Activated naive CD4-positive, alpha-beta T cell treated with anti-CD3 and anti-CD28 coated beads, Interleukin-2, amount 10 ng/mL, durations not matched to agents 7 days and 5 days (primary cell): ENCODE measurements at regions of chr6 and their contacts with region 1.

Region 1: DNA sequence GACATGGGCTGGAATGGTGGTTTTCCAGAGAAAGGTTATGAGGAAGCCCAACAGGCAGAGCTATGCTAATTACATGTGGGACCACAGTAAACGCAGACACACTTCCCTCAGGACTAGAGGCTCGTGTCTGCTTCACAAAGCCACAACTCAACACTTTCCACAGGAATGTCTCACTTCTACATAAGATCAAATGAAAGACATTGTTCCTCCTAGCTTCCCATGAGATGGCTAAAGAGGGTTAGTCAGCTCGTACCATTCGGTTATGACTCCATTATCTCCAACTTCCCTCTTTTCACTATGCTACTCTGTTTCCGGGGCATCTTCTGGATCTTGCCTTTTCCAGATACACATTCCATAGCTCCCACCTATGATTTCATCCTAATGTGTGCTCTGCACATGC is 29.1 kb upstream of the ZC3H12D start:
- DNase-seq: no peak
- H3K4me3 Mint-ChIP-seq: no peak overlapping the region
- H3K27ac Mint-ChIP-seq: no peak overlapping the region
- H3K4me1 Mint-ChIP-seq: peaks cover 23% of the 10 kb centered on the region
- H3K27me3 Mint-ChIP-seq: no peaks in the 10 kb centered on the region

Region 2: GRCh38 chr6:149028767-149029405 is 485.0 kb before region 1 on chr6:
- CTCF ChIA-PET with region 1: interaction called, 22 read pairs
- DNase-seq: peak; percentile 78
- H3K4me3 Mint-ChIP-seq: no peak overlapping the region
- H3K27ac Mint-ChIP-seq: no peak overlapping the region
- H3K4me1 Mint-ChIP-seq: peaks cover 53% of the 10 kb centered on the region
- H3K27me3 Mint-ChIP-seq: no peaks in the 10 kb centered on the region

Region 3: GRCh38 chr6:149082286-149082707 is 431.6 kb before region 1 on chr6:
- CTCF ChIA-PET with region 1: interaction called, 16 read pairs
- DNase-seq: peak; percentile 94
- H3K4me3 Mint-ChIP-seq: peak overlapping the region; percentile 0
- H3K27ac Mint-ChIP-seq: peak overlapping the region; percentile 89
- H3K4me1 Mint-ChIP-seq: peaks cover 88% of the 10 kb centered on the region
- H3K27me3 Mint-ChIP-seq: no peaks in the 10 kb centered on the region

Region 4: GRCh38 chr6:149454386-149454848 is 59.5 kb before region 1 on chr6:
- CTCF ChIA-PET with region 1: interaction called, 11 read pairs
- DNase-seq: no peak
- H3K4me3 Mint-ChIP-seq: no peak overlapping the region
- H3K27ac Mint-ChIP-seq: no peak overlapping the region
- H3K4me1 Mint-ChIP-seq: peaks cover 10% of the 10 kb centered on the region
- H3K27me3 Mint-ChIP-seq: no peaks in the 10 kb centered on the region

Region 5: GRCh38 chr6:149484733-149485700 is 28.9 kb before region 1 on chr6 and contains the start of gene ZC3H12D:
- CTCF ChIA-PET with region 1: interaction called, 27 read pairs
- DNase-seq: peak; percentile 87
- H3K4me3 Mint-ChIP-seq: peak within 1 kb of the TSS; percentile 80
- H3K27ac Mint-ChIP-seq: peak within 1 kb of the TSS; percentile 98
- H3K4me1 Mint-ChIP-seq: peaks cover 60% of the 10 kb centered on the region
- H3K27me3 Mint-ChIP-seq: no peaks in the 10 kb centered on the region

Region 6: DNA sequence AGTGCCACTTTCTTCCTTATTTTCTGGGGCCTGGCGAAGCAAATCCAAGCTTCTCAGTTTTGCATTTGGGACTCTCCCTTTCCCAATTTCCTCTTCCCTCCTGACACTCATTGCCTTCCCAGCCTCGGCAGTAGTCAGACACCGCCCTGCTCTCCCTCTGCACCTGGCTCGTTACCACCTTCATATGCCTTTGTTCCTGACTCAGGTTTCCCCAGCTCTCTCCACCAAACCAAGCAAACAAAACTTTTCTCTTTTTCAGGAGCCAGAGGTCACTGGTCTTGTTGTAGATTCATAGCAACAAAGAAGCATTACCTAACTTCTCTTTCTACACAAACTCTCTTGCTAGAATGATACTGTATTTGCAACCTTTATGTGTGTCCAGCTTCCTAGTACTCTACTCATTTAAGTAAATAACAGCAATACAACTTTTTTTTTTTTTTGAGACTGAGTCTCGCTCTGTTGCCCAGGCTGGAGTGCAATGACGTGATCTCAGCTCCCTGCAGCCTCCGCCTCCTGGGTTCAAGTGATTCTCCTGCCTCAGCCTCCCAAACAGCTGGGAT is 20.1 kb before region 1 on chr6:
- CTCF ChIA-PET with region 1: interaction called, 31 read pairs
- DNase-seq: no peak
- H3K4me3 Mint-ChIP-seq: no peak overlapping the region
- H3K27ac Mint-ChIP-seq: peak overlapping the region; percentile 42
- H3K4me1 Mint-ChIP-seq: peaks cover 53% of the 10 kb centered on the region
- H3K27me3 Mint-ChIP-seq: no peaks in the 10 kb centered on the region

Region 7: DNA sequence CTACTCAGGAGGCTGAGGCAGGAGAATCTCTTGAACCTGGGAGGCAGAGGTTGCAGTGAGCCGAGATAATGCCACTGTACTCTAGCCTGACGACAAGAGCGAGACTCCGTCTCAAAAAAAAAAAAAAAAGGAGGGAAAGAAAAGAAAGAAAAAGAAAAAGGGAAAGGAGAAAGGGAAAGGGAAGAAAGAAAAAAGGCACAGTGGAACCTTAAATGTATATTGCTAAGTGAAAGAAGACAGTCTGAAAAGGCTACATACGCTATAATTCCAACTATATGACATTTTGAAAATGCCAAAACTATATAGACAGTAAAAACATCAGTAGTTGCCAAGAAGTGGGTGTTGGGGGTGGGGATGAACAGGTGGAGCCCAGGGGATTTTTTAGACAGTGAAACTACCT is 15.7 kb after region 1 on chr6:
- CTCF ChIA-PET with region 1: interaction called, 23 read pairs
- DNase-seq: no peak
- H3K4me3 Mint-ChIP-seq: no peak overlapping the region
- H3K27ac Mint-ChIP-seq: no peak overlapping the region
- H3K4me1 Mint-ChIP-seq: no peaks in the 10 kb centered on the region
- H3K27me3 Mint-ChIP-seq: no peaks in the 10 kb centered on the region